ENCODE measurements at regions of chr11 and their contacts with region 1.

Region 1: GRCh38 chr11:115334932-115335788 is 169.1 kb downstream of the CADM1 start:
- DNase-seq: no peak
- H3K4me3 Mint-ChIP-seq: no peak overlapping the region
- H3K27ac Mint-ChIP-seq: no peak overlapping the region
- H3K4me1 Mint-ChIP-seq: no peaks in the 10 kb centered on the region
- H3K27me3 Mint-ChIP-seq: peaks cover 3% of the 10 kb centered on the region

Region 2: DNA sequence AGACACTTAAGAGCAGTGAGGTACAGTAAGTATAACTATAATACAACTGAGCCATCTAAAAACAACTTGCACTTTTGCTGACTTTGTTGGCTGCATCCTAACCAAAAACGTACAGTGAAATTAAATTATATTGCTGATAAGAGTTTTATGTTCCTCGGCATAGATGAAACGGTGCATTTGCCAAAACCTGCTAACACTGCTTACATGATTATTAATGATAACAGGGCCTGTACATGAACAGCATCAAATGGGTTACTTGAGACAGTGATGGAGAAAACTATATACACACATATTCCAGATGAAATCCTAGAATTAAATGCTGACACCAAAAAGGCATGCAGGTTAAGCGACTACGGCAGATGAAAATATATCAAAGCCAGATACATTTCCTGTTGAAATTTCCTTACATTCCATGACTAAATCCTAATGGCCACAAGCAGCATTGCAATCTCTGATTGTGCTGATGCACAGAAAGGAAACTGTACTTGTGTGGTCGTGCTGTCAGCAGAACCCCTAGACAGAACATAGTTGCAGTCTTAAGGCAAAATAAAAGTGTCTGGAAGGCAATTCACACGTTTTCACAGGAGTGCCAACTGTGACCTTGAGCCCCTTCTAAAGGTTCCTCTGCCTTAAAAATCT is 25.1 kb after region 1 on chr11:
- intact Hi-C with region 1: no loop called
- DNase-seq: no peak
- H3K4me3 Mint-ChIP-seq: no peak overlapping the region
- H3K27ac Mint-ChIP-seq: no peak overlapping the region
- H3K4me1 Mint-ChIP-seq: no peaks in the 10 kb centered on the region
- H3K27me3 Mint-ChIP-seq: no peaks in the 10 kb centered on the region

Region 3: GRCh38 chr11:115396533-115396932 is 61.4 kb after region 1 on chr11:
- intact Hi-C with region 1: no loop called
- DNase-seq: no peak
- H3K4me3 Mint-ChIP-seq: no peak overlapping the region
- H3K27ac Mint-ChIP-seq: no peak overlapping the region
- H3K4me1 Mint-ChIP-seq: no peaks in the 10 kb centered on the region
- H3K27me3 Mint-ChIP-seq: no peaks in the 10 kb centered on the region

Region 4: DNA sequence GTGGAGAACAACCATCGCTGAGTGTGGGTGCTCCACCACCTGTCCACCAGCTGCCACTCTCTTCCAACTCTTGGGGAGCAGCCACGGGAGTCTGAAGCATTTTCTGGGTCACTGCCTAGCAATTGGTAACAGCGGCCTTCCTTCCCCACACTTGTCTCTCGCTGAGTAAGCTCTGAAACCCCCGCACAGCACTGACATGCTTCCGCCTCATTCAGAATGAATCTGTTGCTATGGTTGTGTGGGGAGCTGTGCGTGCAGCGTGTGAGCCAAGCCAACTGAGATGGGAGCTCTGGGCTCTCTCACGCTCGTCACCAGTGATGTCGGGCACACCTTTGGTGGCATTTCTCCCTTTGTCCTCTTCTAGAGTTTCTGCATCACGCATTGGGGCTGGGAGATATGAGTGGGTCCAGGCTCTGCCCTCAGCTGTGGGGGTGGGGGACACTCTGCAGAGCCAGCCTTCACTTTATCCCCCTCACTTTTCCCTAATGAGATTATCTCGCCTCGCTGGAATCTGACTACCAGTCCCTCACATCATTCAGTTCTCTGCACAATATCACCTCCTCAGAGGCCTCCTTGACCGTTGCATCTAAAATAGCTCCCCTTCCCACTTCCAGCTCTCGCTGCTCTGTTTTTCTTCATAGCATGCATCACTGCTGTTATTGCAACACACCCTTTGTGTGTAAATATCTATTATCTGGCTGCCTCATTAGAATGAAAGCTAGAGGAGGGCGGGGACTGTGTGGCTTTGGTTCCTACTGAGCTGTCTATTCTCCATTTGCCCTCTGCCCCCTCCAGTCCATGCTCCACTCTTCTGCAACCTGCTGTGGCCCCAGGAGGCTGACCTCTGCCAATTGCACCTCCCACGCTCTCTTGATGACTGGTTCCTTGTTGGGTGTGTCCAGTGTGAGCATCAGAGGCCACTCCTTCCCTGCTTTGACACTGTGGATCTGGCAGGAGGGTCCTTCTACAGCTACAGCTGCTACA is 739.0 kb after region 1 on chr11:
- intact Hi-C with region 1: loop called (anchors 5 kb)
- DNase-seq: no peak
- H3K4me3 Mint-ChIP-seq: no peak overlapping the region
- H3K27ac Mint-ChIP-seq: no peak overlapping the region
- H3K4me1 Mint-ChIP-seq: no peaks in the 10 kb centered on the region
- H3K27me3 Mint-ChIP-seq: peaks cover 5% of the 10 kb centered on the region

Region 5: DNA sequence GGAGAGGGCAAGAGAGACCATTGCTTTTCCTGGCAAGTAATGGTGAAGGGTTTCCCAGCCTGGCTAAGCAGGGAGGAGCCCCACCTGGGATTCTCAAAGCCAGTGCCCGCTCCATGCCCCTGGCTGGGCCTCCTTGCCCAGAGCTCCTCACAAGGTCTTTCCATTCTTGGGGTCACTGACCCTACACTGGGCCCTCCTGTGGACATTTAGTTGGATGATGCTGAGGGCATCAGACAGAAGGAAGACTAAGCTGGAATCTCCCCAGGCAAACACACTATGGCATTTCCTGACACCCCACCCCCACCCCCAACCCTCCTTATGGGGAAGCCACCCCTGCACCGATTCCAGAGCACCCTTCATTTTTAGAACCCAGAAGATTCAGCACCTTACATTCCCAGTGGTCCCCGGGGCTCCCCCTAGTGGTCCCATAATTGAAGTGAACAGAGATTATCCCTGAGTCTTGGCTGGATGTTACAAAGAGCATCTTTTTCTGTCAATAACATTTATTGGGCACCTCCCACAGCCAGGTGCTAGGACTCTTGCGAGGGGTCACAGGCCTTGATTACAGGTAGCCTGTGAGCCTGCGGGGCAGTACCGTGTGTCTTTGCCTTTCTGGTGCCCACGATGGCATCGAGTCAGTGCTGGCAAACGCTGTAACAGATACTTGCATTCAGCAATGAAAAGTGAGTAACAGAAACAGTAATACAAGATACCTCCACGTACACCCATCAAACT is 889.2 kb after region 1 on chr11:
- intact Hi-C with region 1: loop called (anchors 10 kb)
- DNase-seq: no peak
- H3K4me3 Mint-ChIP-seq: no peak overlapping the region
- H3K27ac Mint-ChIP-seq: no peak overlapping the region
- H3K4me1 Mint-ChIP-seq: no peaks in the 10 kb centered on the region
- H3K27me3 Mint-ChIP-seq: no peaks in the 10 kb centered on the region